Dorsolateral prefrontal cortex (tissue), 120 donors: ENCODE measurements at regions of chr11 and their contacts with region 1.

Region 1: GRCh38 chr11:73335204-73335923 is 27.3 kb downstream of the ARHGEF17 start:
- DNase-seq: peak; percentile 74 to 93 (median 86)
- H3K4me3 ChIP-seq: peak overlapping the region in 2 of 59 donors; percentile 5 to 24
- H3K27ac ChIP-seq: peak overlapping the region in 47 of 59 donors; percentile 2 to 82 (median 56)
- H3K27me3 ChIP-seq: no peaks in the 10 kb centered on the region
- CTCF ChIP-seq: peak in 55 of 56 donors; percentile 77 to 100 (median 98)

Region 2: DNA sequence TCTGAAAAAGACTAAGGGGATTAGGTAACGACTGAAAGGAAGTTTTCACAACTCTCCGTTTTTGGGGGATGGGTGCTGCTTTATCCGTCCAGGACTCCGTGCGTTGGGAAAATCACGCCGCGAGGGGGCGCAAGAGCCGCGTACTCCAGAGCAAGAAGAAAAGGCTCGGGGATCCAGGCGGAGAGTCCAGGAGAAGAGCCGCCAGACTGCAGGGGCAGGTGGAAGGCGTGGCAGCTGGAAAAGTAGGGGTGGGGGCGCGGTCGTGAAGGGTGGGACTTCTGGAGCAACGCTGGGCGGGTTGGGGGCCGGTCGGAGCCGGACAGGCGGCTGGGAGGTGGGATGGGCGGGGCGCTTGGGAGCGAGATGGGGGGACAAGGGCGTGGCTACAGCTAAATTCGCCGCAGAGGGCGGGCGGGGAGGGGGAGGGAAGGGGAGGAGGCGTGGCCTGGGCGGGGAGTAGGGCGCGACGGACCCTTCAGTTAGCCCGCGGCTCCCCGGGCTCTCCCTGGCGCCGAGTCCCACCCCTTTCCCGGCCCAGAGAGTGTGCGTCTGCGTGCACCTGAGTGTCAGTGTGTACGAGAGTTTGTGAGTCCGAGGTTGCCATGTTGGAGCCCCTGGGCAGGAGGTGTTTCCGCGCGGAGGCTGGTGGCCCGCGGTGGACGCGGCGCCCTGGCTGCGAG is 27.9 kb before region 1 on chr11:
- intact Hi-C with region 1: loop called (anchors 1 kb)
- DNase-seq: peak; percentile 91 to 98 (median 94)
- H3K4me3 ChIP-seq: peak overlapping the region; percentile 46 to 81 (median 67)
- H3K27ac ChIP-seq: peak overlapping the region in 52 of 59 donors; percentile 2 to 93 (median 79)
- H3K27me3 ChIP-seq: peaks cover 0 to 9% (median 0%) of the 10 kb centered on the region in 45 donors
- CTCF ChIP-seq: peak; percentile 44 to 87 (median 78)

Region 3: GRCh38 chr11:73314117-73314961 is 21.0 kb before region 1 on chr11:
- intact Hi-C with region 1: loop called in 1 of 2 experiments (anchors 2 kb)
- DNase-seq: peak in 9 of 10 donors; percentile 66 to 84 (median 81)
- H3K4me3 ChIP-seq: peak overlapping the region in 31 of 59 donors; percentile 3 to 79 (median 69)
- H3K27ac ChIP-seq: peak overlapping the region in 58 of 59 donors; percentile 60 to 95 (median 88)
- H3K27me3 ChIP-seq: no peaks in the 10 kb centered on the region
- CTCF ChIP-seq: peak in 11 of 56 donors; percentile 7 to 33 (median 23)